ENCODE measurements at regions of chr7 and their contacts with region 1.

Region 1: DNA sequence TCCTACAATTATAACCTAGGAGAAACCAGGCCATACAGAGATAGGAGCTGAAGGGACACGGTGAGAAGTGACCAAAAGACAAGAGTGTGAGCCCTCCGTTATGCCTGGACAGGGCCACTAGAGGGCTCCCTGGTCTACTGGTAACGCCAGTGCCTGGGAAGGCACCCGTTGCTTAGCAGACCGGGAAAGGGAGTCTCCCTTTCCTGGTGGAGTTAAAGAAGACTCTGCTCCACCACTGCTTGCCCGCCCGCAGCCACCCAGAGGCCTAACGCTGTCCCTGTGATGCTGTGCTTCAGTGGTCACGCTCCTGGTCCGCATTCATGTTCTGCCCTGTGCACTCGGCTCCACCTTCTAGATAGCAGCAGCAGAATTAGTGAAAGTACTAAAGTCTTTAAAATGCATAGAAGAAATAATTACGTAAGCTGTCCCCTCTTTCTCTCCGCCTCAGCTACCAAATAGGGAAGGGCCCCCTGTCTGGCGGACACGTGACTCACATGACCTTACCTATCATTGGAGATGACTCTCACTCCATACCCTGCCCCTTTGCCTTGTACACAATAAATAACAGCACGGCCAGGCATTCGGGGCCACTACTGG is 34.8 kb downstream of the GRID2IP start:
- DNase-seq: peak; percentile 80
- ATAC-seq: peak; percentile 96
- H3K4me3 ChIP-seq: peak overlapping the region in 2 of 3 experiments; percentile 17 to 29; a peak in 1 of 6 replicates
- H3K27ac ChIP-seq: no peak overlapping the region
- H3K4me1 ChIP-seq: peaks cover 6% of the 10 kb centered on the region; the same call in 1 of the 2 replicates
- H3K27me3 ChIP-seq: peaks cover 0 to 7% of the 10 kb centered on the region in 2 experiments; a peak in 3 of 5 replicates
- CTCF ChIP-seq: peak; percentile 95
- EP300 ChIP-seq: no peak
- POLR2A ChIP-seq: no peak
- RAD21 ChIP-seq: peak; percentile 91

Region 2: GRCh38 chr7:6096581-6096980 is 419.9 kb before region 1 on chr7:
- CTCF ChIA-PET with region 1: no interaction called
- POLR2A ChIA-PET with region 1: no interaction called
- in situ Hi-C with region 1: no loop called
- intact Hi-C with region 1: no loop called
- DNase-seq: no peak
- ATAC-seq: no peak
- H3K4me3 ChIP-seq: no peak overlapping the region
- H3K27ac ChIP-seq: no peak overlapping the region
- H3K4me1 ChIP-seq: peaks cover 16% of the 10 kb centered on the region
- H3K27me3 ChIP-seq: no peaks in the 10 kb centered on the region
- CTCF ChIP-seq: no peak
- EP300 ChIP-seq: no peak
- POLR2A ChIP-seq: no peak
- RAD21 ChIP-seq: no peak

Region 3: GRCh38 chr7:6558837-6559236 is 42.4 kb after region 1 on chr7:
- CTCF ChIA-PET with region 1: interaction called, 7 read pairs
- POLR2A ChIA-PET with region 1: interaction called, 4 read pairs
- in situ Hi-C with region 1: no loop called
- intact Hi-C with region 1: loop called (anchors 1 kb)
- DNase-seq: peak; percentile 73
- ATAC-seq: peak; percentile 78
- H3K4me3 ChIP-seq: no peak overlapping the region
- H3K27ac ChIP-seq: no peak overlapping the region
- H3K4me1 ChIP-seq: no peaks in the 10 kb centered on the region
- H3K27me3 ChIP-seq: no peaks in the 10 kb centered on the region
- CTCF ChIP-seq: peak; percentile 83
- EP300 ChIP-seq: no peak
- POLR2A ChIP-seq: no peak
- RAD21 ChIP-seq: peak; percentile 36; the same call in 1 of the 2 replicates